ENCODE measurements at regions of chr9 and their contacts with region 1.

Region 1: GRCh38 chr9:1869843-1870242 is 145.3 kb upstream of the SMARCA2 start:
- DNase-seq: peak; percentile 58
- H3K4me3 Mint-ChIP-seq: no peak overlapping the region
- H3K27ac Mint-ChIP-seq: no peak overlapping the region
- H3K4me1 Mint-ChIP-seq: peaks cover 9% of the 10 kb centered on the region
- H3K27me3 Mint-ChIP-seq: peaks cover 27% of the 10 kb centered on the region

Region 2: DNA sequence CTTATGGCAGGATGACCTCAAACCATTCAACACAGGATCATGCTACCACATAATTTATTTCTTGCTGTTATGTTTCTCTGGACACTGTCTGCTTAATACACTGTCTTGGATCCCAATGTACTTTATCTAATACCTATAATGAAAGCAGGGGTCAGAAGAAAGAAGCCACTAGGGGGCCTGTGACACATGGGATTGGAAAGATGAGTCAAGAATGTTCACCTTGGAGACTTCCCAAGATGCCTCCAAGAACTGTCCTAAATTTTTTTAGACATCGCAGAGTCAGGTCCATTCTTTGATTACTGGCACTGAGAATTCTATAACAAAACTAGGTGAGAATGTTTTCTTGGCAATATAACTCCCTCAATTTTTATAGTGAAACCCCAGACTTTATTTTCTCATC is 160.5 kb before region 1 on chr9:
- CTCF ChIA-PET with region 1: no interaction called
- intact Hi-C with region 1: loop called (anchors 1 kb)
- DNase-seq: peak; percentile 27
- H3K4me3 Mint-ChIP-seq: no peak overlapping the region
- H3K27ac Mint-ChIP-seq: no peak overlapping the region
- H3K4me1 Mint-ChIP-seq: no peaks in the 10 kb centered on the region
- H3K27me3 Mint-ChIP-seq: peaks cover 26% of the 10 kb centered on the region

Region 3: DNA sequence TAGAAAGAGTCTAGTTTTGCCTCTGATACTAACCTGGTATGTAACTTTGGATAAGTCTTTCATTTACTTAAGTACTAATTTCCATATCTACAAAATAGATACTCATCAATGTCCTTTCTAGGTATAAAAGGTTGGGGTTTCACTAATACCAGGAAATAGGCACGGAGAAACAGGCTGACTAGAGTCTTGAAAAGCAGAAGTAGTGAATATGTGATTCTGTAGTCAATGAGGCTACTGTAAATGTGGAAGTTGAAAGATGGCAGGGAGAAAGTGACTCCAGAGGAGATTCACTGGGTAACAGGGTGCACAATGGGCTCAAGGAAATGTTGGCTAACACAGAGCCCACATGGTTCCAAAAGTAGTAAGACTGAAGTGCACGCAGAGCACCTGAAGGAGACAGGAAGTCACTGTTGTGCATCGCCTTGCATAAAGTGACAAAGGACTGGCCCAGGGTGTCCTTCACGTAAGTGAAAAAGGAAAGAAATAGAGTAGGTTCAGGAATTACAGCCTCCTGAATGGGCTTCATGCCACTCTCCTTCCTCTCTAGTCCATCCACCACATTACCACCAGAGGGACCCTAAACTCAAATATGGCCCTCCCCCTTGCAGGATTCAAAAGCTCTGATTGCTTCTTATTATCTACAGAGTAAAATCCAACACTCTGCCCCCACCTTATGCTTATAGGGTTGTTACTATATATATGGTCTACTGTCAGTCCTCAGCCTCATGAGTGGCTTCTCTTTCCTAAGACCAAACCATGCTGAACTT is 142.7 kb before region 1 on chr9:
- CTCF ChIA-PET with region 1: interaction called, 16 read pairs
- intact Hi-C with region 1: loop called (anchors 1 kb)
- DNase-seq: peak; percentile 16
- H3K4me3 Mint-ChIP-seq: no peak overlapping the region
- H3K27ac Mint-ChIP-seq: no peak overlapping the region
- H3K4me1 Mint-ChIP-seq: no peaks in the 10 kb centered on the region
- H3K27me3 Mint-ChIP-seq: peaks cover 5% of the 10 kb centered on the region

Region 4: DNA sequence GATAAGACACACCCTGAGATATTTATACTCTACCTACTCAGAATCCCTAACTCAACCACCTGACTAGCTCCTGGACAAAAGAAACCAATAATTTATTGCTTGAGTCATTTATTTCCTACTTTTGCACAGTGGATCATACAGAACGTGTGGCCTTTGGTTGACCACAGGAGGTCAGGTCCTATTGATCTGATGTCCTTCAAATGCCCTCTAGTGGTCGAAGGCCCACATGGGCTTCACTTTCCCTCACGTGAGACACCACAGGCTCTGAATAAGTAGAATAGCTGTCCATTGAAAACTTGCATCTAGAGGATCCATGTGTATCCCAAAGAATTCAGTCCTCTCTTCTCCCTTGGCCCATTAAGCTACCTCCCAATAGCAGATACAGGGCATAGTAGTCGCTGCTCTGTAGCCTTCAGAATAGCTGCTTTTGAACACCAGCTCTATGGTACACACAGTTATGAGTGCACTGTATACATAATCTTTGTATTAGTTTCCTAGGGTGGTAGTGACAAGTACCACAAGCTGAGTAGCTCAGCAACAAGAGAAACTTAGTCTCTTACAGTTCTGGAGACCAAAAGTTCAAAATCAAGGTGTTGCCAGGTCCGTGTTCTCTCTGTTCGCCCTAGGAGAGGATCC is 32.3 kb before region 1 on chr9:
- CTCF ChIA-PET with region 1: interaction called, 10 read pairs
- intact Hi-C with region 1: no loop called
- DNase-seq: peak; percentile 37
- H3K4me3 Mint-ChIP-seq: no peak overlapping the region
- H3K27ac Mint-ChIP-seq: no peak overlapping the region
- H3K4me1 Mint-ChIP-seq: no peaks in the 10 kb centered on the region
- H3K27me3 Mint-ChIP-seq: peaks cover 6% of the 10 kb centered on the region